ENCODE measurements at regions of chr3 and their contacts with region 1.

Region 1: GRCh38 chr3:179961081-179962078 is 75.4 kb downstream of the PEX5L start:
- DNase-seq: no peak
- ATAC-seq: no peak

Region 2: DNA sequence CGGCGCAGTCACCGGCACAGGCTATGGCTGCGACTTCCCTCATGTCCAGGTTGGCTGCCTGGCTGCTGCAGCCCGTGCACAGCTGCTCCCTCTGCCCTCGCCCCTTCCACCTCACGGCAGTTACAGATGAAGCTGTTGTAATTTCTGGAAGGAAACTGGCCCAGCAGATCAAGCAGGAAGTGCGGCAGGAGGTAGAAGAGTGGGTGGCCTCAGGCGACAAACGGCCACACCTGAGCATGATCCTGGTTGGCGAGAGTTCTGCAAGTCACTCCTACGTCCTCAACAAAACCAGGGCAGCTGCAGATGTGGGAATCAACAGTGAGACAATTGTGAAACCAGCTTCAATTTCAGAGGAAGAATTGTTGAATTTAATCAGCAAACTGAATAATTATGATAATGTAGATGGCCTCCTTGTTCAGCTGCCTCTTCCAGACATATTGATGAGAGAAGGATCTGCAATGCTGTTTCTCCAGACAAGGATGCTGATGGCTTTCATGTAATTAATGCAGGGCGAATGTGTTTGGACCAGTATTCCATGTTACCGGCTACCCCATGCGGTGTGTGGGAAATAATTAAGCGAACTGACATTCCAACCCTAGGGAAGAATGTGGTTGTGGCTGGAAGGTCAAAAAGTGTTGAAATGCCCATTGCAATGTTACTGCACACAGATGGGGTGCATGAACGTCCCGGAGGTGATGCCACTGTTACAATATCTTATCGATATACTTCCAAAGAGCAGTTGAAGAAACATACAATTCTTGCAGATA is 496.9 kb before region 1 on chr3:
- intact Hi-C with region 1: loop called (anchors 5 kb)
- DNase-seq: no peak
- ATAC-seq: no peak

Measured in sciatic nerve (tissue), 2 donors.